ENCODE measurements at regions of chr2 and their contacts with region 1.

Region 1: GRCh38 chr2:181334158-181334826 is 122.9 kb upstream of the ITGA4 start:
- DNase-seq: no peak
- ATAC-seq: peak; percentile 61
- H3K4me3 Mint-ChIP-seq: no peak overlapping the region
- H3K27ac Mint-ChIP-seq: peak overlapping the region; percentile 25
- H3K4me1 Mint-ChIP-seq: peaks cover 10% of the 10 kb centered on the region
- H3K27me3 Mint-ChIP-seq: no peaks in the 10 kb centered on the region
- CTCF ChIP-seq: no peak

Region 2: GRCh38 chr2:181348107-181348837 is 14.0 kb after region 1 on chr2:
- CTCF ChIA-PET with region 1: interaction called, 5 read pairs
- POLR2A ChIA-PET with region 1: no interaction called
- intact Hi-C with region 1: loop called (anchors 2 kb)
- DNase-seq: no peak
- ATAC-seq: peak; percentile 75
- H3K4me3 Mint-ChIP-seq: no peak overlapping the region
- H3K27ac Mint-ChIP-seq: peak overlapping the region; percentile 67
- H3K4me1 Mint-ChIP-seq: peaks cover 38% of the 10 kb centered on the region
- H3K27me3 Mint-ChIP-seq: no peaks in the 10 kb centered on the region
- CTCF ChIP-seq: no peak

Region 3: GRCh38 chr2:181457121-181457740 is 122.9 kb after region 1 on chr2 and contains the start of gene ITGA4:
- CTCF ChIA-PET with region 1: no interaction called
- POLR2A ChIA-PET with region 1: no interaction called
- intact Hi-C with region 1: no loop called
- DNase-seq: peak; percentile 87
- ATAC-seq: peak; percentile 78
- H3K4me3 Mint-ChIP-seq: peak within 1 kb of the TSS; percentile 97
- H3K27ac Mint-ChIP-seq: peak within 1 kb of the TSS; percentile 97
- H3K4me1 Mint-ChIP-seq: peaks cover 64% of the 10 kb centered on the region
- H3K27me3 Mint-ChIP-seq: no peaks in the 10 kb centered on the region
- CTCF ChIP-seq: peak; percentile 23
- total RNA-seq, gene ITGA4: 89.2 and 104 TPM in 2 replicates

Region 4: GRCh38 chr2:182302174-182302573 is 967.9 kb after region 1 on chr2:
- CTCF ChIA-PET with region 1: no interaction called
- POLR2A ChIA-PET with region 1: no interaction called
- intact Hi-C with region 1: no loop called
- DNase-seq: no peak
- ATAC-seq: no peak
- H3K4me3 Mint-ChIP-seq: no peak overlapping the region
- H3K27ac Mint-ChIP-seq: no peak overlapping the region
- H3K4me1 Mint-ChIP-seq: no peaks in the 10 kb centered on the region
- H3K27me3 Mint-ChIP-seq: no peaks in the 10 kb centered on the region
- CTCF ChIP-seq: no peak

Measured in activated B cell treated with CpG ODN at 0.5 μM for 24 hours (primary cell).